ENCODE measurements at regions of chr7 and their contacts with region 1.

Region 1: GRCh38 chr7:101815835-101816493 is 1.5 kb upstream of the CUX1 start:
- DNase-seq: peak; percentile 68
- H3K4me3 Mint-ChIP-seq: peak overlapping the region; percentile 80
- H3K27ac Mint-ChIP-seq: peak overlapping the region; percentile 78
- H3K4me1 Mint-ChIP-seq: peaks cover 13% of the 10 kb centered on the region
- H3K27me3 Mint-ChIP-seq: peaks cover 29% of the 10 kb centered on the region

Region 2: GRCh38 chr7:101278461-101279292 is 537.3 kb before region 1 on chr7:
- intact Hi-C with region 1: no loop called
- DNase-seq: no peak
- H3K4me3 Mint-ChIP-seq: no peak overlapping the region
- H3K27ac Mint-ChIP-seq: no peak overlapping the region
- H3K4me1 Mint-ChIP-seq: no peaks in the 10 kb centered on the region
- H3K27me3 Mint-ChIP-seq: no peaks in the 10 kb centered on the region

Region 3: GRCh38 chr7:101465576-101466196 is 350.3 kb before region 1 on chr7:
- intact Hi-C with region 1: no loop called
- DNase-seq: no peak
- H3K4me3 Mint-ChIP-seq: peak overlapping the region; percentile 5
- H3K27ac Mint-ChIP-seq: peak overlapping the region; percentile 42
- H3K4me1 Mint-ChIP-seq: peaks cover 10% of the 10 kb centered on the region
- H3K27me3 Mint-ChIP-seq: no peaks in the 10 kb centered on the region

Region 4: DNA sequence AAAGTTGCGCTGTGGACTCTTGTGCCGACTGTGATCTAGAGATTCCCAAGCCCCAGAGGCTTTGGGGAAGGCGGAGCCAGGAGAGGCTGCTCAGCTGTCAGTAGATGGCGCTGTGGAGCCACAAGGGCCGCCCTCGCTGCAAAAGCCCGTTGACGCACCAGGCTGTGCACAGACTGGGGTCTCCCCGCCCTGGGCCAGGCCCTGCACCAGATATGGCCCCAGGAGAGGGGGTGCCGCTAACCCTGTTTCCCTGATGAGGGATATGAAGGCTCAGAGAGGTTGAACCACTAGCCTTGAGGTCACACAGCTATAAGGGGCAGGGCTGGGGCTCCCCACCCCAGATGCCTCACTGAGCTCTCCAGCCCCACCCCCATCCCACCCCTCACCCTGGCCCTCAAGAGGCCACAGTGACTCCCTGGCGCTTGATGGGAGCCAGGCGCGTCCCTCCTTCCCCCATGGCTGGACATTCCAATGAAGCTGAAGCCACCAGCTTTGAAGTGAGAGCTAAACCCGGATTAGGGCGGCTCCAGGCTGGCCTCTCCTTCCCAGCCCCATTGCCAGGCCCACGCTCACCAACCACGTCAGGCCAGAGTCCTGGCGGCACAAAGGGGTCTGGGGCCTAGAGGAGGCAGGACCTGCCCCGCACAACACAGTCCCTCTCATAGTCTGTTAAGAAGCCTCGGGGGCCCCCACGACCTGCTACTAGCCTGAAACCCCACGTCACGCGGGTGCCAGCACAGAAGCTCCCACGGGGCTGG is 213.3 kb before region 1 on chr7:
- intact Hi-C with region 1: loop called (anchors 10 kb)
- DNase-seq: peak; percentile 58
- H3K4me3 Mint-ChIP-seq: no peak overlapping the region
- H3K27ac Mint-ChIP-seq: no peak overlapping the region
- H3K4me1 Mint-ChIP-seq: peaks cover 1% of the 10 kb centered on the region
- H3K27me3 Mint-ChIP-seq: no peaks in the 10 kb centered on the region

Region 5: GRCh38 chr7:101688183-101688831 is 127.7 kb before region 1 on chr7:
- intact Hi-C with region 1: loop called (anchors 2 kb)
- DNase-seq: peak; percentile 71
- H3K4me3 Mint-ChIP-seq: no peak overlapping the region
- H3K27ac Mint-ChIP-seq: no peak overlapping the region
- H3K4me1 Mint-ChIP-seq: peaks cover 5% of the 10 kb centered on the region
- H3K27me3 Mint-ChIP-seq: no peaks in the 10 kb centered on the region

Region 6: DNA sequence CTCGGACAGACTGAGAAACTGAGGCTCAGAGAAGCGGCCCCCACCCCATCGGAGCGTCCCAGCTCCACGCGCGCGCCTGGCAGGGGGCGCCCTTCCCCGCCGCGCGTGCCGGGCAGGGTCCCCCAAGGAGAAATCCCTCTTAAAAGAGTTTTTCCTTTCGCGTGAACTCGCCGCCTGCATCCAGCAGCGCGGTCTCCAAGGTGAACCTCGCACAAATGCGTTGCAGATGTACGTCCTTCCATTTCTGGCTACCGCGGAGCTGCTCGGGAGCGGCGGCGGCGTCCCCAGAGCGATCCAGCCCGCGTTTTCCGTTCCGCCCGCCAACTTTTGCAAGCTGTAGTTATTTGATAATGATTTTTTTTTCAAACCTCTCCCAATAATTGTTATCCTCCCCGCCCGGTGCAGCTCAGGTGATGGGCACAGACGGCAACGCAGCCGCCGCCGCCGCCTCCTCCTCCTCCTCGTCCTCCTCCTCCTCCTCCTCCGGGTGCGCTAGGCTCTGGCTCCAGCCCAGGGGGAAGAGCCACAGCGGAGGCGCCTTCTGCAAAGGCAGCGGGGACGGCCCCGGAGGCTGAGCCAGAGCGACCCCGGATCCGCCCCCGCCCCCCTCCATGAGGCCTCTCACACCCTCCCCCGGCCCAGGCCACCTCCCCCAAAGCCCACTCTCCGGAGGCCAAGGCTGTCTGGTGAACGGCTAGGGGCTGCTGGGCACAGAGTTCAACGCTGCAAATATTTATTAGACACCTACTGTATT is 72.5 kb before region 1 on chr7:
- intact Hi-C with region 1: loop called (anchors 1 kb)
- DNase-seq: peak; percentile 71
- H3K4me3 Mint-ChIP-seq: peak overlapping the region; percentile 76
- H3K27ac Mint-ChIP-seq: no peak overlapping the region
- H3K4me1 Mint-ChIP-seq: peaks cover 44% of the 10 kb centered on the region
- H3K27me3 Mint-ChIP-seq: no peaks in the 10 kb centered on the region

Region 7: DNA sequence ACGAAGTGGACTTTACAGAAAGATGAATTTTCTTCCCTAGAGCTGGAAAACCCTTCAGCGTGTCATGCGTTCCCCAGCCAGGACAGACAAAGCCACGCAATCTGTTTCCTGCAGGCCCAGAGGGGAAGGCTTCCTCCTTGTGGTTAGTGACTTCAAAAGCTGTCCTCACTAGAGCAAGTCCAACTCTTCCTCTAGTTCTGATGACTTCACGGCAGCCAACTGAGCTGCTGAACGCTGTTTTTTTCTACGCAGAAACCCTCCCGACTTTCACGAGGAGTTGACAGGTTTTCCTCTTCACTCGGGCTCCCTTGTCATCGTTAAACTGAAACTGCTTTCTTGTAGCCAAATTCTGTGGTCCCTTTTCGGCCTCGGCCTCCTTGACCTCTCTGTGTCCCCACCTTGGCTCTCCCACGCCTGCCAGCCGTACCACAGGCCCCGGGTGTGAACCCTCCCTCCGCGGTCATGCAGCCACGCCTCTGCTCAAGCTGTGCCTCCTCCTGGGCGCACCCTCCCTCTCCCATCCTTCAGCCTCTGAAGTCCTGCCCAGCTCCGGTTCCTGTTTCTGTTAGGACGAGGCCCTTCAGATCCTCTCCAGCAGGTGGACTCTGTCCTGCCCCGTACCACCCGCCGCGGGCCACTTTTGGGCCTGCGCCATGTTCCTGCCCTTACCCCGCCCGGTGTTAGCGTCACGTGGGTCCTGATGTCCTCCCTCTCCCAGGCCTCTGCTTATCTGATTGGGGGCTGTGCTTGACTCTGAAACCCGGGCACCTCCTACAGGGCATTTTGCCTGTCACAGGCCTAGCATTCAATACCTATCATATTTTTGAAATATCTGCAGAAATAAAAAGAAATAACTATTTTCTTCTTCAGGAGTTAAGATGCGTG is 40.8 kb after region 1 on chr7:
- intact Hi-C with region 1: loop called (anchors 1 kb)
- DNase-seq: peak; percentile 77
- H3K4me3 Mint-ChIP-seq: peak overlapping the region; percentile 90
- H3K27ac Mint-ChIP-seq: peak overlapping the region; percentile 99
- H3K4me1 Mint-ChIP-seq: peaks cover 27% of the 10 kb centered on the region
- H3K27me3 Mint-ChIP-seq: no peaks in the 10 kb centered on the region

Measured in activated T-helper 2 cell treated with anti-CD3 and anti-CD28 coated beads, Interferon-gamma antibody, Interleukin-2, Interleukin-4, amounts not matched to agents 10 μg/mL and 5 μg/mL and 100 μg/mL, durations not matched to agents 14 hours and 24 hours and 36 hours (primary cell).